Right ventricle myocardium inferior (tissue), 1 donor: ENCODE measurements at regions of chr9 and their contacts with region 1.

Region 1: GRCh38 chr9:113401027-113401792 is at the start of gene ALAD:
- DNase-seq: peak; percentile 100
- ATAC-seq: peak; percentile 99
- total RNA-seq, gene ALAD: 136 TPM

Region 2: GRCh38 chr9:113150670-113151611 is 250.3 kb before region 1 on chr9 and contains the start of gene SLC31A2:
- intact Hi-C with region 1: loop called (anchors 10 kb)
- DNase-seq: peak; percentile 97
- ATAC-seq: peak; percentile 96
- total RNA-seq, gene SLC31A2: 14.6 TPM

Region 3: DNA sequence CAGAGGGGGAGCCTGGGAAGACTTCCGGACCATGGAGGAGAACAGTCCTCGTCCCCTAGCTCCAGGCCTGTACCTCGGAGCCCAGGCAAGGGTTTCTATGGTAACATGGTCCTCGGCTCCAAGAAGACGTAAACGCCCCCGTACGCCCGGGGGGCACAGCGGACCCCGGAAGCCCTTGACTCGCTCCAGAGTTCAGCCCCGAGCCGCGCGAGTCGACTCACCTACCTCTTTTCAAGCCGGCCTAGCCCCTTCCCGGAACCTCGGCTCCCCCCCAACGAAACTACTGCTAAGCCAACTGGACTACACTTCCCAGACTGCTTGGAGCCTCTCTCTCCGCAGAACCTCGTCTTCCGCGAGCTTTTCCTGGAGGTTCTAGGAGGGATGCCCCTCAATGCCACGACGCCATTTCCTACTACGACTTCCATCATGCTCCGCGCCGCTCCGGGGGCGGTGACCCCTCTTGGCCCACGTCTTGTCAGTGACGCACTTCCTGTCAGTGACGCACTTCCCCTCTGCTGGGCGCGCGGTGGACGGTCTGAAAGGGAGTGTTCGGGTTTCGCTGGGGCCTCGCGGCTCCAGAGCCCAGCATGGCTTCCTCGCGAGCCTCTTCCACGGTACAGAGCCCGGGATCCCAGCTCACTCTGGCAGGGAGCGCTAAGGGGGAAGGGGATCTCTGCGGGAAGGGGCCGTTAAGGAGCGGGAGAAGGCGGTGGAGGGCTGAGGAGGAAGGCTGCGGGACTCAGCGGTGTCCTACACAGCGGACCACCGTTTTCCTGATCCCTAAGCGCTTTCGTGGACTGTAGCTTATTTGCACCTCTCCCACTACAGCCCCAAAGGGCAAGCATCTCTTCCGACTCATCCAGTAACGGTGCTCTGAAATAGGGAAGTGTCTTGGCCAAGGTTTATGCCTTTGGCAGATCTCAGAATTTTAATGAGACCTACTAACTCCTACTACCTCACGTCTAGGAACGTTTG is 125.8 kb before region 1 on chr9 and contains the starts of genes CDC26 and PRPF4:
- intact Hi-C with region 1: loop called (anchors 2 kb)
- DNase-seq: peak; percentile 98
- ATAC-seq: peak; percentile 97
- total RNA-seq, gene CDC26: 38.3 TPM
- total RNA-seq, gene PRPF4: 11.0 TPM

Region 4: GRCh38 chr9:113309204-113309813 is 91.9 kb before region 1 on chr9:
- intact Hi-C with region 1: loop called (anchors 2 kb)
- DNase-seq: no peak
- ATAC-seq: no peak

Region 5: GRCh38 chr9:113343732-113344231 is 57.4 kb before region 1 on chr9:
- intact Hi-C with region 1: loop called (anchors 1 kb)
- DNase-seq: peak; percentile 77
- ATAC-seq: peak; percentile 77

Region 6: DNA sequence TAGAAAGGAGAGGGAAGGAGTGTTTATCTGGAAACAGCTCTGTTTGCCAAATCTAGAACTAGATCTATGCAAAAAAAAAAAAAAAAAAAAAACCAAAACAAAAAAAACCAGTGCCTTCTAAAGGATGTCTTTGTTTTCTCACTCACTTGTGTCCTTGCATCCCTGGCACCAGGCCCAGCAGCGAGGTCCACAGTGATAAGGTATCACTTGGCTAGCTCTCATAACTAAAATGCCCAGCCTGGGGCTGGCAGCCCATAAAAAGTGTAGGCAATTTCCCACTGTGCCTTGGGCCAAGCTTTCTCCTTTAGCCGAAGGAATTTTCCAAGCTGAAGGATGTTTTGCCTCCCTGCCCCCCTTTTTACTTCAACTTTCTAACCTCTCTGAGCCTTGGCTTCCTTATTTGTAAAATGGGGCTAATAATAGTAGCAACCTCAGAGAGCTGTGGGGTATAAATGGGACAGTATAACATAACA is 83.1 kb after region 1 on chr9:
- intact Hi-C with region 1: no loop called
- DNase-seq: peak; percentile 83
- ATAC-seq: peak; percentile 75

Region 7: DNA sequence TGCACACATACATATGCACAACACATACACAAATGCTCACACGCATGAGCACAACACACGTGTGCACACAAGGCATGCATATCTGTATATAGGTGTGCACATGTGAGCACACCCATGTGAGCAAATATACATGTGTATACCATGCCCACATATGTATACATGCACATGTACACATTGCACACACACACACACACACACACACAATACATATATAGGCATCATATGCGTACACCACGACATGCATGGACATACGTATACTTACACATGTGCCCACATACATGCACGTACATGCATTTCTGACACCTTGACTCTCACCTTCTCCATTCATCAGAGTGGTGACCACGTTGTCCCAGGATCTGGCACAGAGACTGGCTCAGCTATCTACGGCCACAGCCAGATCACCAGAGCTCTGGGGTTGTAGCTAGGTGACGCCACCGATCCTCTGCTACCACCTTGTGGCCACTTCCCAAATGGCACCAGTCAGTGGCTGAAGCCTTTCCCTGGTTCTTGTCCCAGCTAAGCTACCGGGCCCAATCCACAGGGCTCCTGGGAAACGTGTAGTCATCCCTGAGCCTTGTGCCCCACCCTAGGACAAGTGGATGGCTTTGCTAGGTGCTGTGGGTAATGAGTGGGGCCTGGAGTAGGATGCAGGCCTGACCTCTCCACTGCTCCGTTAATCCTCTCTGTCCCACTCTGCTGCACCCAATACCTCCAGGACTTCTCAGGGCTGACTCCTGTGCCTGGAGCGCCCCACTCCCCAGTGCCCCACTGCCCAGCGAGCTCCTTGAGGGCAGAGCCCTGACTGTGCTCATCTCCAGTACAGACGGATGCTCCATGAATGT is 256.7 kb after region 1 on chr9:
- intact Hi-C with region 1: loop called (anchors 5 kb)
- DNase-seq: peak; percentile 84
- ATAC-seq: peak; percentile 72

Region 8: DNA sequence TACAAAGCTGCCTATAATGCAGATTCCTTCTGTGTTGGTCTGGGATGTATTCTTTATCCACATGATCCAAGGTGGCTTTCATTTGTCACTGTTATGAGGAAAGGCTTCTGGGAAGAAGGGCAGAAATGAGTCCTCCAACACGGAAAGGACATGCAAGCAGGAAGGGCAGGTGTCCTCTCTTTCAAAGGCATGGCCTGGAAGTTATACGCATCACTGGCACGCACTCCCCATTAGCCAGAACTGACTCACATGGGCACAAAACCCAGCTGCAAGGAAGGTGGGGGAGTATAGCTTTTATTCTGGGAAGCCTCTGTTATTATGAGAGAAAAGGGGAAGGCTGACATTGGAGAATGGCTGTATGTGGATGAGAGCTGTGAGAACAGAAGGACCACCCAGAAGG is 333.6 kb after region 1 on chr9:
- intact Hi-C with region 1: no loop called
- DNase-seq: no peak
- ATAC-seq: no peak